ENCODE measurements at regions of chr2 and their contacts with region 1.

Region 1: DNA sequence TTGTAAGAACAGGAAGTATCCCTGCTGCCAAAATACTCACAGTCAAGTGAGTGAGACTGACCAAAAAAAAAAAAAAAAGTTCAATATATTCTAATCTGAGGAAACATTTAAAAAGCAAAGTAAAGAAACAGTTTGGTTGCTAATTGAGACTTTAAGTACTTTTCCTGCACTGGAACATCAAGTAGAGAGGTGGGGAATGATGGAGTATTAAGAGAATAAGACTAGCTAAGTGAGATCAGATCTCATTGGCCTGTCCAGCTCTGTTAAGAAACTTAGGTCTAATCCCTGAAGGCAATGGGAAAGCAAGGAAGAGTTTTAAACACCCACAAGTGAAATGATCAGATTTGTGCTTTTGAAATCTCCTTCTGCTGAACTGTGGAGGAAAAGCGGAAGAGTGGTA is 27.8 kb upstream of the MAP4K3 start:
- DNase-seq: no peak
- ATAC-seq: no peak
- H3K4me3 Mint-ChIP-seq: no peak overlapping the region
- H3K27ac Mint-ChIP-seq: peak overlapping the region; percentile 11; the same call in 1 of the 2 replicates
- H3K4me1 Mint-ChIP-seq: peaks cover 33% of the 10 kb centered on the region
- H3K27me3 Mint-ChIP-seq: no peaks in the 10 kb centered on the region
- CTCF ChIP-seq: no peak

Region 2: DNA sequence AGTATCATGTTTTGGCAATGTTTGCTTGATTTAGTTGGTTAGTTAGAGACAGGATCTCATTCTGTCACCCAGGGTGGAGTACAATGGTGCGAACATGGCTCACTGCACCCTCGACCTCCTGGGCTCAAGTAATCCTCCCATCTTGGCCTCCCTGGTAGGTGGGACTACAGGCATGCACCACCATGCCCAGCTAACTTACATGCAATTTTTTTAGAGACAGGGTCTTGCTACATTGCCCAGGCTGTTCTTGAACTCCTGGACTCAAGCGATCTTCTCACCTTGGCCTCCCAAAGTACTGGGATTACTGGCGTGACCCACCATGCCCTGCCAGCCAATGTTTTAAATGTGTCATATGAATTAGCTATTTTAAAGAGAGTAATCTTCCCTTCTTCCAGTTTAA is 204.8 kb before region 1 on chr2:
- CTCF ChIA-PET with region 1: no interaction called
- POLR2A ChIA-PET with region 1: interaction called, 12 read pairs
- DNase-seq: no peak
- ATAC-seq: no peak
- H3K4me3 Mint-ChIP-seq: no peak overlapping the region
- H3K27ac Mint-ChIP-seq: no peak overlapping the region
- H3K4me1 Mint-ChIP-seq: peaks cover under 1% of the 10 kb centered on the region
- H3K27me3 Mint-ChIP-seq: no peaks in the 10 kb centered on the region
- CTCF ChIP-seq: no peak

Measured in WTC11 (cell line).